H1 (cell line): ENCODE measurements at regions of chr2 and their contacts with region 1.

Region 1: DNA sequence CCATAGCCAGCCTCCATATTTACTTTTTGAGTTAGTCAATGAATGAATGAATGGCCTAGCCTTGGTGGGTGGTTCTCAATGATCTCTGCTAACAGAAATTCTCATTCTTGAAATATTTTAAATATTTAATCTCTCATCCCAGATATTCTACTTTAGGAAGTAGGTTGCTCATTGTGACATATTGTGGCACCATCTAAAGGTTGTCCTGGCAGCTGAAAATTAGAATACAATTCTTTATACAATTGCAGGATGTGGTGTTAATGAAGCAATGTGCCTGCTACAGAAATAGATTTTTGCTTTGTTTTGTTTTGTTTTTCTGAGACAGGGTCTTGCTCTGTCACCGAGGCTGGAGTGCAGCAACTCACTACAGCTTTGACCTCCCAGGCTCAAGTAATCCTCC is 35.8 kb downstream of the SCG2 start:
- DNase-seq: no peak
- H3K4me3 ChIP-seq: no peak overlapping the region
- H3K27ac ChIP-seq: no peak overlapping the region
- H3K4me1 ChIP-seq: peaks cover 0 to 4% (median 0%) of the 10 kb centered on the region in 4 experiments; a peak in 1 of 7 replicates
- H3K27me3 ChIP-seq: no peaks in the 10 kb centered on the region
- CTCF ChIP-seq: no peak
- EP300 ChIP-seq: no peak
- POLR2A ChIP-seq: no peak
- RAD21 ChIP-seq: no peak

Region 2: DNA sequence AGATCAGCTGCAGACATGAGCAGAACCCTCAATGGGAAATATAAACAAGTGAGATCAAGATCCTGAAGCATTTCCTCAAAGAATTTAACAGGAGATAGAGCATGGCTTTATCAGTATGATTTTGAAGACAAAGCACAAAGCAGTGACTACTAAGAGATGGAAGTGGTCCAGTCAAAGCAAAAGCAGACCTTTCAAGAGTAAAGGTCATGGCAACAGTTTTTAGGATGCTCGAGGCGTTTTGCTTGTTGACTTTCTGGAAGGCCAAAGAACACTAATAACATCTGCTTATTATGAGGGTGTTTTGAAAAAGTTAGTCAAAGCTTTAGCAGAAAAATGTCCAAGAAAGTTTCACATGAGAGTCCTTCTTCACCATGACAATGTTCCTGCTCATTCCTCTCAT is 385.9 kb before region 1 on chr2:
- CTCF ChIA-PET with region 1: no interaction called
- POLR2A ChIA-PET with region 1: no interaction called
- DNase-seq: no peak
- H3K4me3 ChIP-seq: no peak overlapping the region
- H3K27ac ChIP-seq: no peak overlapping the region
- H3K4me1 ChIP-seq: no peaks in the 10 kb centered on the region
- H3K27me3 ChIP-seq: no peaks in the 10 kb centered on the region
- CTCF ChIP-seq: no peak
- EP300 ChIP-seq: no peak
- POLR2A ChIP-seq: no peak
- RAD21 ChIP-seq: no peak

Region 3: GRCh38 chr2:223508372-223508771 is 58.0 kb before region 1 on chr2:
- CTCF ChIA-PET with region 1: no interaction called
- POLR2A ChIA-PET with region 1: no interaction called
- DNase-seq: no peak
- H3K4me3 ChIP-seq: no peak overlapping the region
- H3K27ac ChIP-seq: no peak overlapping the region
- H3K4me1 ChIP-seq: no peaks in the 10 kb centered on the region
- H3K27me3 ChIP-seq: peaks cover 0 to 1% (median 0%) of the 10 kb centered on the region in 4 experiments; a peak in 1 of 7 replicates
- CTCF ChIP-seq: no peak
- EP300 ChIP-seq: no peak
- POLR2A ChIP-seq: no peak
- RAD21 ChIP-seq: no peak

Region 4: DNA sequence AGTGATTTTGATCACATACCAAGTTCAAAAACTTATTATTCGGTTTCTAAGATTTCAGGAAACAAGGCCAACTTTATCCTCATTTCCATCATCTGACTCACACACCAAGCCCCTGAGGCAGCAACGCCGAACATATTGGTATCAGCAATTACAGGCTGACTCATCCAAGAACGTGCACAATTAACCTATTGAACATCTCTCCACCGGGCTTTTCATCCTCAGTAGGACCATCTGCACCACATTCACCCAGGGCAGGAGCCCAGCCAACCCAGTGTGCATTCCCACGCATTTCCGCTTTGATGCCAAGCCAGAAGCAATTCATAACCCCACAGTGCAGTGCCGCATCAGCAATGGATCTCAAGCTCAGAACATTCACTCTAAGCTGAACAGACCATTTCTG is 17.2 kb before region 1 on chr2:
- CTCF ChIA-PET with region 1: no interaction called
- POLR2A ChIA-PET with region 1: no interaction called
- DNase-seq: no peak
- H3K4me3 ChIP-seq: no peak overlapping the region
- H3K27ac ChIP-seq: no peak overlapping the region
- H3K4me1 ChIP-seq: no peaks in the 10 kb centered on the region
- H3K27me3 ChIP-seq: no peaks in the 10 kb centered on the region
- CTCF ChIP-seq: no peak
- EP300 ChIP-seq: no peak
- POLR2A ChIP-seq: no peak
- RAD21 ChIP-seq: no peak

Region 5: DNA sequence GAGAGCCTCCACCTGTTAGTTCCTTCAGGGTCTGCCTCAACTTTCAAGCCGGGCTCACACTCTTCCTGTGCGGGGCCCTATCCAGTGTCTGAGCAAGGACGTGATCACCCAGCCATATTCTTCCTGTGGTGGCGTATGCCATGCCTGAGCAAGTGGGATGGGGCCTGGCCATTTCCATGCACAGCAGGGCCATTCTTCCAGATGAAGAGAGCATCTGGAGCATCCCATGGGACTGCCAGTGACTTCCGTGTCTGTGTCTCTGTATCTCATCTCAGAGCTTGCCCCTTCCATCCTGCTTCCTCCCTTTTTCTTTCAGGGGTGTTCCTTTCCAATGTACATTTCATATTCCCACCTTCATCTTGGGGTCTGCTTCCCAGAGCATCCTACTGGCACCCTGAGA is 15.6 kb after region 1 on chr2:
- CTCF ChIA-PET with region 1: interaction called, 11 read pairs
- POLR2A ChIA-PET with region 1: no interaction called
- DNase-seq: no peak
- H3K4me3 ChIP-seq: no peak overlapping the region
- H3K27ac ChIP-seq: no peak overlapping the region
- H3K4me1 ChIP-seq: no peaks in the 10 kb centered on the region; a peak in 1 of 7 replicates
- H3K27me3 ChIP-seq: no peaks in the 10 kb centered on the region
- CTCF ChIP-seq: no peak
- EP300 ChIP-seq: no peak
- POLR2A ChIP-seq: no peak
- RAD21 ChIP-seq: no peak

Region 6: DNA sequence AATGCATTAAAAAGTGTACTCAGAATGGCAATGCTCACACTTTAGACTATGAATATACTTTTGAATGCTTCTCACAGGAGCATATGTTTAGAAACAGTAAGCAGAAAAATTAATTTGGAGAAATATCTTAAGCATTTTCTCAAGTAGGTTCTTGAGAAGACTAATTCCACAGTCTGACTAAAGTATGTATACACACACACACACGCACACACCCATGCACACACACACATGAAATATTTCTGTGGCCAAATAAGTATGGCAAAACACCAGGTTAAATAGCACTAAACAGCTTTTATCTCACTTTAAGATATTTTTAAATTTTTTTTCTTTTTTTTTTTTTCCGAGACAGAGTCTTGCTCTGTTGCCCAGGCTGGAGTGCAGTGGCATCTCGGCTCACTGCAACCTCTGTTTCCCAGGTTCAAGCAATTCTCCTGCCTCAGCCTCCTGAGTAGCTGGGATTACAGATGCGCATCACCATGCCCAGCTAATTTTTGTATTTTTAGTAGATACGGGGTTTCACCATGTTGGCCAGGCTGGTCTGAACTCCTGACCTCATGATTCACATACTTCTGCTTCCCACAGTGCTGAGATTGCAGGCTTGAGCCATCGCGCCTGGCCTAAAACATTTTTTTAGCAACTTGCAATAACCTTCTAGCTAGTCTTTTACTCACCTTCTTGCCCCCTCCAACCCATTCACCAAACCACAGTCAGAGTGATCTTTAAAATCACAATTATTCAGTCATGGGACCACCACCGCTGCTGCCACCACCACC is 103.2 kb after region 1 on chr2:
- CTCF ChIA-PET with region 1: no interaction called
- POLR2A ChIA-PET with region 1: no interaction called
- DNase-seq: no peak
- H3K4me3 ChIP-seq: no peak overlapping the region
- H3K27ac ChIP-seq: no peak overlapping the region
- H3K4me1 ChIP-seq: no peaks in the 10 kb centered on the region
- H3K27me3 ChIP-seq: no peaks in the 10 kb centered on the region
- CTCF ChIP-seq: no peak
- EP300 ChIP-seq: no peak
- POLR2A ChIP-seq: no peak
- RAD21 ChIP-seq: no peak